ENCODE measurements at regions of chr11 and their contacts with region 1.

Region 1: GRCh38 chr11:119481021-119481666 is 58.2 kb upstream of the THY1 start:
- DNase-seq: peak; percentile 99
- ATAC-seq: peak; percentile 98
- H3K4me3 ChIP-seq: no peak overlapping the region
- H3K27ac ChIP-seq: peak overlapping the region; percentile 78
- H3K4me1 ChIP-seq: peaks cover 10% of the 10 kb centered on the region
- H3K27me3 ChIP-seq: no peaks in the 10 kb centered on the region
- CTCF ChIP-seq: peak; percentile 99

Region 2: GRCh38 chr11:119168471-119169281 is 312.5 kb before region 1 on chr11 and contains the start of gene NLRX1:
- CTCF ChIA-PET with region 1: no interaction called
- POLR2A ChIA-PET with region 1: no interaction called
- intact Hi-C with region 1: no loop called
- DNase-seq: peak; percentile 90
- ATAC-seq: peak; percentile 80
- H3K4me3 ChIP-seq: peak within 1 kb of the TSS; percentile 80
- H3K27ac ChIP-seq: peak within 1 kb of the TSS; percentile 36
- H3K4me1 ChIP-seq: peaks cover 22% of the 10 kb centered on the region
- H3K27me3 ChIP-seq: no peaks in the 10 kb centered on the region
- CTCF ChIP-seq: peak; percentile 90
- total RNA-seq, gene NLRX1: 16.8 and 17.2 TPM in 2 replicates

Region 3: GRCh38 chr11:119533921-119534736 is 53.0 kb after region 1 on chr11:
- CTCF ChIA-PET with region 1: no interaction called
- POLR2A ChIA-PET with region 1: no interaction called
- intact Hi-C with region 1: loop called (anchors 1 kb)
- DNase-seq: peak; percentile 85
- ATAC-seq: peak; percentile 98
- H3K4me3 ChIP-seq: no peak overlapping the region
- H3K27ac ChIP-seq: no peak overlapping the region
- H3K4me1 ChIP-seq: no peaks in the 10 kb centered on the region
- H3K27me3 ChIP-seq: no peaks in the 10 kb centered on the region
- CTCF ChIP-seq: peak; percentile 99

Region 4: GRCh38 chr11:119615003-119615881 is 134.1 kb after region 1 on chr11:
- CTCF ChIA-PET with region 1: no interaction called
- POLR2A ChIA-PET with region 1: no interaction called
- intact Hi-C with region 1: loop called (anchors 5 kb)
- DNase-seq: peak; percentile 97
- ATAC-seq: peak; percentile 98
- H3K4me3 ChIP-seq: no peak overlapping the region
- H3K27ac ChIP-seq: peak overlapping the region; percentile 85
- H3K4me1 ChIP-seq: peaks cover 27% of the 10 kb centered on the region
- H3K27me3 ChIP-seq: no peaks in the 10 kb centered on the region
- CTCF ChIP-seq: no peak

Region 5: DNA sequence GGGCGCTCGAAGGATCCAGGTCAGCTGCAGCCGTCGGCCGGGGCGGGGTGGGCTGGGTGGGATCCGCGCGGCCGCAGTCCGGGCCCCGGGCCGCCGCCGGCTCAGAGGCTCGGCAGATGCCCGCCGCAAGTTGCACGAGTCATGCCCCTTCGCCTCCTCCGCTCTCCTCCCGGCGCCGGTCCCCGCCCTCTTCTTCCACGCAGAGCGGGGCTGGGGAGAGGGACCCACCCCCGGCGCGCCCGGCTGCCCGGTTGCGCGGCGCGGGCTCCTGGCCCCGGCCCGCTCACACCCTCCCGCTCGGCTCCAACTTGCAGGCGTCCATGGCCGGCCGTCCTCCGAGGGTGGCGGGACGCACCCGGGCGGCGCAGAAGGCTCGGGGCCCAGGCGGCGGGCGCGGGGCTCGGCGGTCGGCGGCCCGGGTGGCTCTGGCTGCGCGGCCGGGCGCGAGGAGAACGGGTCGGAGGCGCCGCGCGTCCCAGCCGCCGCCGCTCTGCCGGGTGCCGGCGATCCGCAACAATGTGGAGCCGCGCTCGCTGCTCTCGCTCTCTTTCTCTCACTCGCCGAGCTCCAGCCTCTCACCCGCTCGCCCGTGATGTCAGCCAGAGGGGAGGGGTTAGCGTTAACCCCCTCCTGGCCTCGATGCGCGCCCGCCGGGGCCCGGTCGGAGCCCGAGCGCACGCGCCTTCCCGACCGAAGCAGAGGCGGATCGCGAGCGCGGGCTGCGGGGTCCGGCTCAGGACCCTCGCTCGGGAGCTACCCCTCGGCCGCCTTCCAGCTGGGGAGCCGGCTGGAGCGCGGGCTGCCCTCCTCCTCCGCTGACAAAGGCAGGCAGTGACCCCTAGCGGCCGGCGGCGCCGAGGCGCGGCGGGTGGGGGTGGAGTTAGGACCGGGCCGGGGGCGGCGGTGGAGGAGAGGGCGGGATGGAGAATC is 247.8 kb after region 1 on chr11 and contains the start of gene NECTIN1:
- CTCF ChIA-PET with region 1: no interaction called
- POLR2A ChIA-PET with region 1: no interaction called
- intact Hi-C with region 1: loop called (anchors 1 kb)
- DNase-seq: peak; percentile 86
- ATAC-seq: peak; percentile 77
- H3K4me3 ChIP-seq: peak within 1 kb of the TSS; percentile 97
- H3K27ac ChIP-seq: peak within 1 kb of the TSS; percentile 30; the same call in 1 of the 2 replicates
- H3K4me1 ChIP-seq: peaks cover 22% of the 10 kb centered on the region
- H3K27me3 ChIP-seq: no peaks in the 10 kb centered on the region
- CTCF ChIP-seq: peak; percentile 98
- total RNA-seq, gene NECTIN1: 19.9 and 24.6 TPM in 2 replicates

Region 6: GRCh38 chr11:120108154-120108865 is 627.2 kb after region 1 on chr11:
- CTCF ChIA-PET with region 1: no interaction called
- POLR2A ChIA-PET with region 1: no interaction called
- intact Hi-C with region 1: loop called (anchors 1 kb)
- DNase-seq: peak; percentile 80
- ATAC-seq: peak; percentile 92
- H3K4me3 ChIP-seq: no peak overlapping the region
- H3K27ac ChIP-seq: no peak overlapping the region
- H3K4me1 ChIP-seq: no peaks in the 10 kb centered on the region
- H3K27me3 ChIP-seq: peaks cover 42% of the 10 kb centered on the region
- CTCF ChIP-seq: peak; percentile 99